ENCODE measurements at regions of chr18 and their contacts with region 1.

Region 1: GRCh38 chr18:24611075-24611474 is 150.6 kb downstream of the HRH4 start:
- DNase-seq: no peak
- ATAC-seq: no peak
- H3K4me3 ChIP-seq: no peak overlapping the region
- H3K27ac ChIP-seq: no peak overlapping the region
- H3K4me1 ChIP-seq: no peaks in the 10 kb centered on the region
- H3K27me3 ChIP-seq: no peaks in the 10 kb centered on the region
- CTCF ChIP-seq: no peak

Region 2: DNA sequence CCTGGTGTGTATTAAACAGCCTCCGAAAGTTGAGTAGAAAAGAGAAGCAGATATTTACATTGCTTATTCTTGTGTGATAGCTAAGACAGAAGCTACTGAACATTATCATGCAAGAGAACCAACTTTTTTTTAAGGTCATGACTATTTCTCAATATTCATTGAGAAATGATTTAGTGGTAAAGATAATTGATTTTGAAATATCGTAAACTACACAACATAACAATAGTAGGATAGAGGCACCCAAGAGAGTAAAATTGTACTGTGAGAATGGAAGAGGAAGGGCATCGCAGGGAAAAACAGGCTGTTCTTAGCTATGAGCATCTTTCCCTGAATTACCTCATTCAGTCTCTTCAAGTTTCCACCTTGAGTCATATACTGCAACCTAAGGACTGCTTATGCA is 125.4 kb before region 1 on chr18:
- intact Hi-C with region 1: no loop called
- DNase-seq: no peak
- ATAC-seq: no peak
- H3K4me3 ChIP-seq: no peak overlapping the region
- H3K27ac ChIP-seq: no peak overlapping the region
- H3K4me1 ChIP-seq: no peaks in the 10 kb centered on the region
- H3K27me3 ChIP-seq: no peaks in the 10 kb centered on the region
- CTCF ChIP-seq: no peak

Region 3: GRCh38 chr18:24631243-24632025 is 20.4 kb after region 1 on chr18:
- intact Hi-C with region 1: loop called in 1 of 2 experiments (anchors 2 kb)
- DNase-seq: no peak
- ATAC-seq: no peak
- H3K4me3 ChIP-seq: no peak overlapping the region
- H3K27ac ChIP-seq: no peak overlapping the region
- H3K4me1 ChIP-seq: no peaks in the 10 kb centered on the region
- H3K27me3 ChIP-seq: no peaks in the 10 kb centered on the region
- CTCF ChIP-seq: no peak

Measured in psoas muscle (tissue), 8 donors.